Activated CD4-positive, alpha-beta T cell treated with anti-CD3 and anti-CD28 coated beads for 36 hours (primary cell): ENCODE measurements at regions of chr19 and their contacts with region 1.

Region 1: DNA sequence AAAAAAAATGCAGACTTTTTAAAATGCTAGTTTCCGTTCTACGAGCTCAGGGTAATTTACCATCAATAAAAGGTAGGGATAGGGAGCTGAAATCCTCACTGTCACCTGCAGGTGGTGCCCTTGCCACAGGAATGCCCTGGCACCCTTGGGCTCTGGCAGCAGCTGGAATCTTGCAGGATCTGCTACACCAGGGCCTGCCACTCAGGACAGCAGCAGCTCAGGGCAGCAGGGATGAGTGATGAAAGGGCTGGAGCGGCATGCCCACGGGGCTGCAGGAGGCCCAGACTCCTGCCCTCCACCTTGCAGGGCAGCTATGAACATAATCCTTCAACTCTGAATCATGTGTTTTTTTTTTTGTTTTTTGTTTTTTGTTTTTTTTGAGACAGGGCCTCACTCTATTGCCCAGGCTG is 54.0 kb downstream of the GNG7 start:
- DNase-seq: peak; percentile 85
- ATAC-seq: peak; percentile 89
- H3K4me3 Mint-ChIP-seq: no peak overlapping the region
- H3K27ac Mint-ChIP-seq: no peak overlapping the region
- H3K4me1 Mint-ChIP-seq: no peaks in the 10 kb centered on the region
- H3K27me3 Mint-ChIP-seq: no peaks in the 10 kb centered on the region

Region 2: GRCh38 chr19:2636897-2637683 is 11.4 kb before region 1 on chr19:
- CTCF ChIA-PET with region 1: interaction called, 15 read pairs
- POLR2A ChIA-PET with region 1: no interaction called
- intact Hi-C with region 1: no loop called
- DNase-seq: peak; percentile 87
- ATAC-seq: peak; percentile 81
- H3K4me3 Mint-ChIP-seq: no peak overlapping the region
- H3K27ac Mint-ChIP-seq: no peak overlapping the region
- H3K4me1 Mint-ChIP-seq: peaks cover 12% of the 10 kb centered on the region
- H3K27me3 Mint-ChIP-seq: peaks cover 4% of the 10 kb centered on the region

Region 3: GRCh38 chr19:2739602-2740313 is 91.2 kb after region 1 on chr19 and contains the start of gene SLC39A3:
- CTCF ChIA-PET with region 1: interaction called, 18 read pairs
- POLR2A ChIA-PET with region 1: interaction called, 5 read pairs
- intact Hi-C with region 1: no loop called
- DNase-seq: peak; percentile 99
- ATAC-seq: peak; percentile 100
- H3K4me3 Mint-ChIP-seq: peak within 1 kb of the TSS; percentile 95
- H3K27ac Mint-ChIP-seq: peak within 1 kb of the TSS; percentile 70
- H3K4me1 Mint-ChIP-seq: peaks cover 14% of the 10 kb centered on the region
- H3K27me3 Mint-ChIP-seq: peaks cover 8% of the 10 kb centered on the region
- total RNA-seq, gene SLC39A3: 26.6 to 46.0 TPM

Region 4: GRCh38 chr19:2759362-2759761 is 110.8 kb after region 1 on chr19:
- CTCF ChIA-PET with region 1: interaction called, 10 read pairs
- POLR2A ChIA-PET with region 1: no interaction called
- intact Hi-C with region 1: no loop called
- DNase-seq: peak; percentile 29
- ATAC-seq: no peak
- H3K4me3 Mint-ChIP-seq: no peak overlapping the region
- H3K27ac Mint-ChIP-seq: no peak overlapping the region
- H3K4me1 Mint-ChIP-seq: peaks cover 4% of the 10 kb centered on the region
- H3K27me3 Mint-ChIP-seq: no peaks in the 10 kb centered on the region

Region 5: DNA sequence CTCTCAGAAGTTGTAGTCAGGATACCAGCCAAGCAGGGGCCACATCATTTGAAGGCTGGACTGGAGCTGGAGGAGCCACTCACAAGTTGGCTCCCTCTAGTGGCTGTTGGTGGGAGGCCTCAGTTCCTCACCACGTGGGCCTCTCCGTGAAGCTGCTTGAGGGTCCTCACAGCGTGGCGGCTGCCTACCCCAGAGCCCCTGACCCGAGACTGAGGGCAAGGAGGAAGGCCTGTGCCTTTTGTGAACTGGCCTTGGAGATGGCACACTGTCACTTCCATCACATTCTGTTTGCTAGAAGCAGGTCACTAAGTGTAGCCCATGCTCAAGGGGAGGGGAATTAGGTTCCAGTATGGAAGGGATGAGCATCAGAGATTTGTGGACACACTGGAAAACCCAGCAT is 460.2 kb after region 1 on chr19:
- CTCF ChIA-PET with region 1: interaction called, 3 read pairs
- POLR2A ChIA-PET with region 1: no interaction called
- intact Hi-C with region 1: loop called in 1 of 2 experiments (anchors 10 kb)
- DNase-seq: peak; percentile 84
- ATAC-seq: peak; percentile 80
- H3K4me3 Mint-ChIP-seq: no peak overlapping the region
- H3K27ac Mint-ChIP-seq: no peak overlapping the region
- H3K4me1 Mint-ChIP-seq: peaks cover 6% of the 10 kb centered on the region
- H3K27me3 Mint-ChIP-seq: no peaks in the 10 kb centered on the region